ENCODE measurements at regions of chr4 and their contacts with region 1.

Region 1: GRCh38 chr4:45732161-45732560 is 391.7 kb downstream of the GABRG1 start:
- DNase-seq: no peak
- ATAC-seq: no peak
- H3K4me3 Mint-ChIP-seq: no peak overlapping the region
- H3K27ac Mint-ChIP-seq: no peak overlapping the region
- H3K4me1 Mint-ChIP-seq: no peaks in the 10 kb centered on the region
- H3K27me3 Mint-ChIP-seq: no peaks in the 10 kb centered on the region

Region 2: GRCh38 chr4:45131020-45131419 is 601.1 kb before region 1 on chr4:
- CTCF ChIA-PET with region 1: no interaction called
- POLR2A ChIA-PET with region 1: no interaction called
- intact Hi-C with region 1: loop called in 1 of 2 experiments (anchors 10 kb)
- DNase-seq: no peak
- ATAC-seq: no peak
- H3K4me3 Mint-ChIP-seq: no peak overlapping the region
- H3K27ac Mint-ChIP-seq: no peak overlapping the region
- H3K4me1 Mint-ChIP-seq: no peaks in the 10 kb centered on the region
- H3K27me3 Mint-ChIP-seq: no peaks in the 10 kb centered on the region